Panc1 (cell line): ENCODE measurements at regions of chr20 and their contacts with region 1.

Region 1: GRCh38 chr20:31454365-31454764 is 13.9 kb downstream of the DEFB123 start:
- DNase-seq: no peak
- ATAC-seq: peak; percentile 67
- H3K4me3 ChIP-seq: no peak overlapping the region
- H3K27ac ChIP-seq: no peak overlapping the region
- H3K4me1 ChIP-seq: no peaks in the 10 kb centered on the region
- H3K27me3 ChIP-seq: no peaks in the 10 kb centered on the region
- CTCF ChIP-seq: no peak

Region 2: GRCh38 chr20:31403886-31404285 is 50.5 kb before region 1 on chr20:
- CTCF ChIA-PET with region 1: no interaction called
- POLR2A ChIA-PET with region 1: interaction called, 10 read pairs
- in situ Hi-C with region 1: no loop called
- intact Hi-C with region 1: no loop called
- DNase-seq: no peak
- ATAC-seq: no peak
- H3K4me3 ChIP-seq: no peak overlapping the region
- H3K27ac ChIP-seq: no peak overlapping the region
- H3K4me1 ChIP-seq: no peaks in the 10 kb centered on the region
- H3K27me3 ChIP-seq: peaks cover 8% of the 10 kb centered on the region; the same call in 1 of the 2 replicates
- CTCF ChIP-seq: no peak

Region 3: GRCh38 chr20:31500527-31500926 is 46.2 kb after region 1 on chr20:
- CTCF ChIA-PET with region 1: interaction called, 138 read pairs
- POLR2A ChIA-PET with region 1: no interaction called
- in situ Hi-C with region 1: no loop called
- intact Hi-C with region 1: no loop called
- DNase-seq: no peak
- ATAC-seq: no peak
- H3K4me3 ChIP-seq: no peak overlapping the region
- H3K27ac ChIP-seq: no peak overlapping the region
- H3K4me1 ChIP-seq: no peaks in the 10 kb centered on the region
- H3K27me3 ChIP-seq: peaks cover 4% of the 10 kb centered on the region; the same call in 1 of the 2 replicates
- CTCF ChIP-seq: no peak

Region 4: DNA sequence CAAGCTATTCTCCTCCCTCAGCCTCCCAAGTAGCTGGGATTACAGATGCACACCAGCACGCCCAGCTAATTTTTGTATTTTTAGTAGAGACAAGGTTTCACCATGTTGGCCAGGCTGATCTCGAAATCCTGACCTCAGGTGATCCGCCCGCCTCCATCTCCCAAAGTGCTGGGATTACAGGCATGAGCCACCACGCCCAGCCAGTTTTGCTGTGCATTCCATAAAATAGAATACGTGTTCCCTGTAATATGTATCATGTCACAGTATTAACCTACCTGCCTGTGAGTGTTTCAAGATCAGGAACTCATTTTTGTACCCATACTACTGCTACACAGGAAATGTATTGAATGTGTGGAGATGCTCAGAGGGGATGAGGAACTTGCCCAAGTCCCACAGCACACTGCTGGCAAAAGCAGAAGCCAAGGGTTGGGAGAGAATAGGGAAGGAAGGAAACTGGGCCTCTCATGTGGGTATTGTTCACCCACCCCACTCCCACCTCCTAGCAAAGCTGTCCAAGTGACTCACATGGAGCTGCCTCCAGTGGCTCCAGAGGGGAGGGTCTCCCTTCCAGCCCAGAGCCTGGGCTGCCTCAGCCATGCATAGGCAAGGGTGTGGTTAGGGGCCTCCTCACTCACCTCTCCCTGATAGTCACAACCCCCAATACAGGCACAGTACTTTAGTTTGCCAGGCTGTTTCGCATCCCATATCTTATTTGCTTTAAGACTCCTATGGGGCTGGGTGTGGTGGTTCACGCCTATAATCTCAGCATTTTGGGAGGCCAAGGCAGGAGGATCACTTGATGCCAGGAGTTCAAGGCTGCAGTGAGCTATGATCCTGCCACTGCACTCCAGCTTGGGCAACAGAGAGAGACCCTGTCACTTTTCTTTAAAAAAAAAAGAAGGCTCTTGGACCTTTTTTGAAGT is 69.3 kb after region 1 on chr20:
- CTCF ChIA-PET with region 1: no interaction called
- POLR2A ChIA-PET with region 1: no interaction called
- in situ Hi-C with region 1: no loop called
- intact Hi-C with region 1: no loop called
- DNase-seq: no peak
- ATAC-seq: peak; percentile 19
- H3K4me3 ChIP-seq: no peak overlapping the region
- H3K27ac ChIP-seq: no peak overlapping the region
- H3K4me1 ChIP-seq: no peaks in the 10 kb centered on the region
- H3K27me3 ChIP-seq: no peaks in the 10 kb centered on the region
- CTCF ChIP-seq: no peak